Calu3 (cell line): ENCODE measurements at regions of chr18 and their contacts with region 1.

Region 1: GRCh38 chr18:50507120-50507590 is 52.7 kb upstream of the MAPK4 start:
- DNase-seq: peak; percentile 63
- H3K4me3 Mint-ChIP-seq: no peak overlapping the region
- H3K27ac Mint-ChIP-seq: no peak overlapping the region
- H3K4me1 Mint-ChIP-seq: no peaks in the 10 kb centered on the region
- H3K27me3 Mint-ChIP-seq: peaks cover 87% of the 10 kb centered on the region
- CTCF ChIP-seq: peak; percentile 65

Region 2: DNA sequence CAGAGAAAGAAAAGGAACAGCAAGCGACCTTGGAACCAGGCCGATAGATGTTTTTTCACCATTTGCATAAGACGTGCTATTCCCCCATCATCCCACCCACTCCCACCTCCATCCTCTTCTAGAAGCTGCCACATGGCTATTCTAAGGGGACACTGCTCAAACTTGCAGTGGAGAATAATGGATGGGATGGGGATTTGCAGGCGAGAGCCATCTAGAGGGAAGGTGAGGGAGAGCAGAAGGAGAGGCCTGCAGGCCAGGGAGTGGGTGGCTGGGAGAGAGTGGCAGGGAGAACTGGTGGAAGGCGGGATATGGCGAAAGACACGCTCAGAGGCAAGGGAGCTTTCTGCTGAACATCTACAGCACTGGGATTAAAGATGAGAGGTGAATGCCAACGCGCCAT is 137.7 kb after region 1 on chr18:
- CTCF ChIA-PET with region 1: no interaction called
- intact Hi-C with region 1: loop called (anchors 5 kb)
- DNase-seq: peak; percentile 46
- H3K4me3 Mint-ChIP-seq: no peak overlapping the region
- H3K27ac Mint-ChIP-seq: no peak overlapping the region
- H3K4me1 Mint-ChIP-seq: no peaks in the 10 kb centered on the region
- H3K27me3 Mint-ChIP-seq: peaks cover 6% of the 10 kb centered on the region
- CTCF ChIP-seq: peak; percentile 47

Region 3: DNA sequence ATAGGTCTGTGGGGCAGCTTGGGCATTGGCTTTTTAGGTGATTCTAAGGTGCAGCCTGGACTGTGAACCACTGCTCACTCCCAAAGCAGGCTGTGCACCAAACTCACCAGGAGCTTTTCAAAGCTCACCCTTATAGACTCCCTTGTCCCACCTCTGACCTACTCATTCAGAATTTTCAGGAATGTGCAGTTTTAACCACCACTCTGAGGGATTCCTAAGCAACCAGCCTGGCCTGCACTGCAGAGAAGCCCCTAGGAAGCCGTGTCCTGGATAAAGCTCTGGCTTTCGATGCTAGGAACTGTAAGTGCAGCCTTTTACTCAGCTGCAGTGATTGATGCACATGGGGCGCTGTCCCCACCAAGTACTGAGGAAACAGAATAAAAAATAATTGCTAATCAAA is 279.7 kb after region 1 on chr18:
- CTCF ChIA-PET with region 1: no interaction called
- intact Hi-C with region 1: loop called (anchors 2 kb)
- DNase-seq: no peak
- H3K4me3 Mint-ChIP-seq: no peak overlapping the region
- H3K27ac Mint-ChIP-seq: no peak overlapping the region
- H3K4me1 Mint-ChIP-seq: no peaks in the 10 kb centered on the region
- H3K27me3 Mint-ChIP-seq: peaks cover 22% of the 10 kb centered on the region
- CTCF ChIP-seq: no peak